Panc1 (cell line): ENCODE measurements at regions of chr12 and their contacts with region 1.

Region 1: GRCh38 chr12:106223485-106224354 is 24.1 kb downstream of the CKAP4 start:
- DNase-seq: peak; percentile 68
- ATAC-seq: peak; percentile 93
- H3K4me3 ChIP-seq: no peak overlapping the region
- H3K27ac ChIP-seq: no peak overlapping the region
- H3K4me1 ChIP-seq: 0 out of 2 replicates have a peak, but pooled peaks cover 3% of the 10 kb centered on the region
- H3K27me3 ChIP-seq: no peaks in the 10 kb centered on the region
- CTCF ChIP-seq: peak; percentile 99

Region 2: GRCh38 chr12:105420659-105421240 is 803.0 kb before region 1 on chr12:
- CTCF ChIA-PET with region 1: interaction called, 3 read pairs
- POLR2A ChIA-PET with region 1: no interaction called
- in situ Hi-C with region 1: no loop called
- intact Hi-C with region 1: loop called (anchors 2 kb)
- DNase-seq: peak; percentile 55
- ATAC-seq: peak; percentile 94
- H3K4me3 ChIP-seq: no peak overlapping the region
- H3K27ac ChIP-seq: peak overlapping the region; percentile 75
- H3K4me1 ChIP-seq: peaks cover 5% of the 10 kb centered on the region
- H3K27me3 ChIP-seq: no peaks in the 10 kb centered on the region
- CTCF ChIP-seq: peak; percentile 88

Region 3: GRCh38 chr12:106282457-106283097 is 58.9 kb after region 1 on chr12:
- CTCF ChIA-PET with region 1: interaction called, 10 read pairs
- POLR2A ChIA-PET with region 1: interaction called, 3 read pairs
- in situ Hi-C with region 1: no loop called
- intact Hi-C with region 1: loop called (anchors 2 kb)
- DNase-seq: no peak
- ATAC-seq: peak; percentile 81; the same call in 1 of the 2 replicates
- H3K4me3 ChIP-seq: no peak overlapping the region
- H3K27ac ChIP-seq: no peak overlapping the region
- H3K4me1 ChIP-seq: no peaks in the 10 kb centered on the region
- H3K27me3 ChIP-seq: no peaks in the 10 kb centered on the region
- CTCF ChIP-seq: peak; percentile 78

Region 4: GRCh38 chr12:106317406-106318082 is 93.8 kb after region 1 on chr12:
- CTCF ChIA-PET with region 1: no interaction called
- POLR2A ChIA-PET with region 1: no interaction called
- in situ Hi-C with region 1: no loop called
- intact Hi-C with region 1: no loop called
- DNase-seq: no peak
- ATAC-seq: no peak
- H3K4me3 ChIP-seq: no peak overlapping the region
- H3K27ac ChIP-seq: no peak overlapping the region
- H3K4me1 ChIP-seq: no peaks in the 10 kb centered on the region
- H3K27me3 ChIP-seq: no peaks in the 10 kb centered on the region
- CTCF ChIP-seq: no peak

Region 5: DNA sequence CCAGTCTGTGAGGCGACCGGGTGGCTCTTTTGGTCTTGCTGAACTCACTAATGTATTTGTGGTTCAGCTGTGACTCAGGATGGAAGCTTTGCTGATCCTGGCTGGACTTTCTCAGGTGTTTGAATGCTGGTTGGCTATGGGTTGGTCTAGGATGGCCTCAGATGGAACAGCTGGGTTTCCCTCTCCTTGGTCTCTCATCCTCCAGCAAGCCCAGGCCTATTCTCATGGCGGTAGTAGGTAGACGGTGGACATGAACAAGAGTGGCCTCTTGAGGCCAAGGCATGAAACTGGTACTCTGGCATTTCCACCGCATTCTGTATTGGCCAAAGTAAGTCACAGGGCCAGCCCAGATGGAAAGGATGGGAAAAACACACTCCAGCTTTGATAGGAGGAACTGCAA is 122.0 kb after region 1 on chr12:
- CTCF ChIA-PET with region 1: interaction called, 7 read pairs
- POLR2A ChIA-PET with region 1: no interaction called
- in situ Hi-C with region 1: no loop called
- intact Hi-C with region 1: loop called (anchors 5 kb)
- DNase-seq: peak; percentile 32
- ATAC-seq: peak; percentile 99
- H3K4me3 ChIP-seq: no peak overlapping the region
- H3K27ac ChIP-seq: no peak overlapping the region
- H3K4me1 ChIP-seq: peaks cover 3% of the 10 kb centered on the region; the same call in 1 of the 2 replicates
- H3K27me3 ChIP-seq: no peaks in the 10 kb centered on the region
- CTCF ChIP-seq: peak; percentile 80

Region 6: DNA sequence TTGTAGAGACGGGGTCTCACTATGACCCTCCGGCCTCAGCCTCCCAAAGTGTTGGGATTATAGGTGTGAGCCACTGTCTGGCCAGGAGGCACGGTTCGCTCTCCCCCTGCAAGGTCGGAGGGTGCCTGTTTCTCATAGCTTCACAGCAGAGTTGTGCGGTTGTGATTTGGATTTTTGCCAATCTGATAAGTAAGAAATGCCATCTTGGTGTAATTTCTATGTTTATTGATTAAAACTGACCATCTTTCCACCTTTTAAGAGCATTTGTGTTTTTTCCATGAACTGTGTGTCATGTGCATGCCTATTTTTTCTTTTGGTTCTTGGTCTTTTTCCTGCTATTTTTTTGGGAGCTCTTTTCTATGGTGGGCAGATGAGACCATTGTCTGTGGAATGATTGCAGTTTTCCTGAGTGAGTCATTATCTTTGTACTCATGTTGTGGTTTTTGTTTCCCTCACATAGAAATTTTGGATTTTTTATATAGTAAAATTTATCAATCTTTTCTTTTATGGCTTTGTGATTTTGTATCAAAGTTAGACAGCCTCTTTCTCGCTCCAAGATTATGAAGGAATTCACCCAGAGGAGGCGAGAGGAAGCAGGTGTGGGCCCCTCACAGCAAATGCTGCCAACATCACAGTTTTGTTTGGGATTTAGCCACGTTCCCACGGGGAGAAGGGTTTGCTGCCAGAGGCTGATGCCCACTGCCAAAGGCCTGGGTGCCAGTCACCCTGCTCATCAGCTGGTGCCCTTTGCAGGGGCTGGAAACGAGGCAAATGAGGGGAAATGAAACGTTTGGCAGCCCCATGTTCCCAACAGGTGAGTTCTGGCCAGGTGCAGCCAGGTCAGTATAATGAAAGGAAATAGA is 406.3 kb after region 1 on chr12:
- CTCF ChIA-PET with region 1: no interaction called
- POLR2A ChIA-PET with region 1: no interaction called
- in situ Hi-C with region 1: no loop called
- intact Hi-C with region 1: no loop called
- DNase-seq: no peak
- ATAC-seq: no peak
- H3K4me3 ChIP-seq: no peak overlapping the region
- H3K27ac ChIP-seq: no peak overlapping the region
- H3K4me1 ChIP-seq: no peaks in the 10 kb centered on the region
- H3K27me3 ChIP-seq: no peaks in the 10 kb centered on the region
- CTCF ChIP-seq: no peak

Region 7: GRCh38 chr12:107436376-107436775 is 1212.7 kb after region 1 on chr12:
- CTCF ChIA-PET with region 1: no interaction called
- POLR2A ChIA-PET with region 1: no interaction called
- in situ Hi-C with region 1: no loop called
- intact Hi-C with region 1: no loop called
- DNase-seq: no peak
- ATAC-seq: no peak
- H3K4me3 ChIP-seq: no peak overlapping the region
- H3K27ac ChIP-seq: no peak overlapping the region
- H3K4me1 ChIP-seq: no peaks in the 10 kb centered on the region
- H3K27me3 ChIP-seq: no peaks in the 10 kb centered on the region
- CTCF ChIP-seq: no peak